Activated CD4-positive, alpha-beta T cell treated with anti-CD3 and anti-CD28 coated beads for 36 hours (primary cell): ENCODE measurements at regions of chr5 and their contacts with region 1.

Region 1: GRCh38 chr5:128083033-128083810 is at the start of gene SLC12A2:
- DNase-seq: peak; percentile 94
- ATAC-seq: peak; percentile 68
- H3K4me3 Mint-ChIP-seq: peak within 1 kb of the TSS; percentile 91
- H3K27ac Mint-ChIP-seq: peak within 1 kb of the TSS; percentile 94
- H3K4me1 Mint-ChIP-seq: peaks cover 50% of the 10 kb centered on the region
- H3K27me3 Mint-ChIP-seq: no peaks in the 10 kb centered on the region
- total RNA-seq, gene SLC12A2: 8.0 to 13.1 TPM

Region 2: DNA sequence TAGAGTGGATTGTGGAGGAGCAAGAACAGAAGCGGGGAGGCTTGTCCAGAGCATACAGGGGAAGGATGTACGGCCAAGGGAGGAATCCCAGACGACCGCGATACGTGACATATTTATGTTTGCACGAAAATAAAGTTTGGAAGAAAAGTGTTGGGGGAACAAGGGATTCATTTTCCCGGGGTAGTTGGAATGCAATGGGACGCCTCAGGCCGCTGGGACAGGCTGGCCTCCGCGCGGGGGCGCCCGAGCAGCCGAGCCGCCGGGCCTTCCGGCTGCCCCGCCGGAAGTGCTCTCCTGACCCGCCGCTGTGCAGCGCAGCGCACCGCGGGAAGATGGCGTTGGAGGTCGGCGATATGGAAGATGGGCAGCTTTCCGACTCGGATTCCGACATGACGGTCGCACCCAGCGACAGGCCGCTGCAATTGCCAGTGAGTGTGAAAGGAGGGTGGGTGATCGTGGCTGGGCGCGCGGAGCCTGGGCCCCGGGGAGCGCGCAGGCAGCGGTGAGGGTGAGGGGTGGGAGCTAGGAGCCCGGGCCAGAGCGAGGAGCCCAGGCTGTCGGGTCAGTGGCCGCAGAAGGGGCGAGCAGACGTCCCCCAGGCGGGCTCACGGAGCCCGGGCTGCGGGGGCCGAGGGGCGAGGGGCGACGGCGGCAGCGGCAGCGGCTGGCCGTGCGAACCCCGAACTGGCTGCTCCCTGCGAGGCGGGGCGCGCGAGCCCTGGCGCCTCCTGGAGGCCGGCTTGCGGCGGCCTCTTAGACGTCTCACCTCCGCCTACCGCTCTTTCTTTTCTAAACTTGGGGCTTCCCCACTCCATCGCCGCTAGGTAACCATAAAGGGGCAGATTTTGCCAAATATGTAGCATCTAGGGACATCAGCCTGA is 1482.4 kb before region 1 on chr5 and contains the start of gene PHAX:
- CTCF ChIA-PET with region 1: no interaction called
- POLR2A ChIA-PET with region 1: no interaction called
- intact Hi-C with region 1: loop called in 1 of 2 experiments (anchors 1 kb)
- DNase-seq: peak; percentile 87
- ATAC-seq: peak; percentile 94
- H3K4me3 Mint-ChIP-seq: peak within 1 kb of the TSS; percentile 97
- H3K27ac Mint-ChIP-seq: peak within 1 kb of the TSS; percentile 99
- H3K4me1 Mint-ChIP-seq: peaks cover 38% of the 10 kb centered on the region
- H3K27me3 Mint-ChIP-seq: no peaks in the 10 kb centered on the region
- total RNA-seq, gene PHAX: 41.4 to 49.1 TPM

Region 3: DNA sequence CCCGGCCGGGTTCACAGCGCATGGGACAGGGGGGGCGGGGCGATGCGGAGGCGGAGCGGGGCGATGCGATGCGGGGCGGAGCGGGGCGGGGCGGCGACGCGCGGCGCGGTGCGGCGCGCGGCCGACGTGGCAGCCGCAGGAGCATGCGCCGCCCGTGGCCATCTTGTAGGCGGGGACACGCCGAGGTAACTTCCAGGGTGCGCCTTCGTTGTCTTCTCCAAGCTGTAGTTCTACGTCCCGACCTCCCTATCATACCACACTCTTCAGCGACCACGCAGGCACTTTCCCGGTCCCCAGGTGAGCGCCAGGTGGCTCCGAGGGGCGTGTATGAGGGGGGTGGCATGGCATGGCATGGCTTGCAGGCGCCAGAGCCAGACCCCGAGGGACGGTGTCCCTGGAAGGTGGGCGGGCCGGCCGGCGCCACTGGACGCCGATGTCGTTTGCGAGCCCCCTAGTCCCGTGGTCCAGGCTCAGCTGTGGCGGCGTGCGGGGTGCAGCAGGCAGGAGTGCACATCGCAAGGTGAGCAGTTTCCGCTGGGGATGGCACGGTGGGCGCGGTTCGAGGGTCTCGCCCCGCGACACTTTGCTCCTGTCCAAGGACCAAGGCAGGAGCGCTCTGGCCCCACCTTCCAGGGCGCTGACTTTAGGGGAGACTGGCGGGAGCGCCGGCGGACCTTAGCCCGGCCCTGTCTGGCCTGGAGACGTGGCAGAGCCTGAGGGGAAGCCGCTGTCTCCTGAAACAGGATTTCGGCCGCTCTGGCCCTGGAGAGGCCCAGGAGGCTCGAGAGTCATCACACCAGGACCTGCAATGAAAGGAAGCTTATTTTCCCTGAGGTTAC is 565.5 kb before region 1 on chr5 and contains the start of gene PRRC1:
- CTCF ChIA-PET with region 1: no interaction called
- POLR2A ChIA-PET with region 1: no interaction called
- intact Hi-C with region 1: loop called (anchors 1 to 5 kb)
- DNase-seq: peak; percentile 90
- ATAC-seq: peak; percentile 95
- H3K4me3 Mint-ChIP-seq: peak within 1 kb of the TSS; percentile 80
- H3K27ac Mint-ChIP-seq: peak within 1 kb of the TSS; percentile 77
- H3K4me1 Mint-ChIP-seq: peaks cover 28% of the 10 kb centered on the region
- H3K27me3 Mint-ChIP-seq: no peaks in the 10 kb centered on the region
- total RNA-seq, gene PRRC1: 35.8 to 47.1 TPM

Region 4: GRCh38 chr5:127785098-127785927 is 297.9 kb before region 1 on chr5:
- CTCF ChIA-PET with region 1: no interaction called
- POLR2A ChIA-PET with region 1: no interaction called
- intact Hi-C with region 1: loop called (anchors 1 to 5 kb)
- DNase-seq: peak; percentile 51
- ATAC-seq: peak; percentile 92
- H3K4me3 Mint-ChIP-seq: no peak overlapping the region
- H3K27ac Mint-ChIP-seq: peak overlapping the region; percentile 88
- H3K4me1 Mint-ChIP-seq: peaks cover 26% of the 10 kb centered on the region
- H3K27me3 Mint-ChIP-seq: peaks cover 13% of the 10 kb centered on the region

Region 5: GRCh38 chr5:128201065-128201926 is 118.1 kb after region 1 on chr5:
- CTCF ChIA-PET with region 1: interaction called, 3 read pairs
- POLR2A ChIA-PET with region 1: no interaction called
- intact Hi-C with region 1: loop called (anchors 2 kb)
- DNase-seq: peak; percentile 91
- ATAC-seq: peak; percentile 87
- H3K4me3 Mint-ChIP-seq: no peak overlapping the region
- H3K27ac Mint-ChIP-seq: no peak overlapping the region
- H3K4me1 Mint-ChIP-seq: peaks cover 37% of the 10 kb centered on the region
- H3K27me3 Mint-ChIP-seq: no peaks in the 10 kb centered on the region